Right ventricle myocardium superior (tissue), 1 donor: ENCODE measurements at regions of chr11 and their contacts with region 1.

Region 1: DNA sequence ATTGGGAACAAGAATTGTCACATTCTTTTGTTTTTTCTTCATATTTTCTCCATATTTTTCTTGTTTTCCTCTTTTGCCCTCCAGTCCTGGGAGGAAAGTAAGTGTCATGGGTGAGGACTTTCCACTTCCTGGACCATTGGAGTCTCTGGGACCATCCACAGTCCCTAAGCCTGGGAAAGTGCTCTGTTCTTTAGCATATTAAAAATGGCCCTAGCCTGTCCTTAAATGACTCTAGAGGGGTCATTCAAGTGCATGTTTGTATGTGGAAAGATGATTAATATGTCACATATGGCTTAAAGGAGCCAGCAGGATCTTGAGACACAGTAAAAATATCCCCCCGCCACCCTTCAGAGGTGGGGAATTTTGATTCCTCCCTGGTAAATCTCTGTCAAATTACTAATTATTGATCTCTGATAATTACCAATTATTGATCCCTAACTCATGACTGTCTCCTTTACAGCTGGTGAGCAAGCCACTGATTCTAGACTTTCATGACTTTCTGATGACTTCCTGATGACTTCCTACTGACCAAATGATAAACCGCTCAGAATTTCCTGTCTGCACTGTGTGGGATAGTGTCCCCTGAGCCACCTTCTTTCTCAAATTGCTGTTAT is 20.0 kb upstream of the SCGB1D1 start:
- DNase-seq: no peak
- ATAC-seq: peak; percentile 59

Region 2: DNA sequence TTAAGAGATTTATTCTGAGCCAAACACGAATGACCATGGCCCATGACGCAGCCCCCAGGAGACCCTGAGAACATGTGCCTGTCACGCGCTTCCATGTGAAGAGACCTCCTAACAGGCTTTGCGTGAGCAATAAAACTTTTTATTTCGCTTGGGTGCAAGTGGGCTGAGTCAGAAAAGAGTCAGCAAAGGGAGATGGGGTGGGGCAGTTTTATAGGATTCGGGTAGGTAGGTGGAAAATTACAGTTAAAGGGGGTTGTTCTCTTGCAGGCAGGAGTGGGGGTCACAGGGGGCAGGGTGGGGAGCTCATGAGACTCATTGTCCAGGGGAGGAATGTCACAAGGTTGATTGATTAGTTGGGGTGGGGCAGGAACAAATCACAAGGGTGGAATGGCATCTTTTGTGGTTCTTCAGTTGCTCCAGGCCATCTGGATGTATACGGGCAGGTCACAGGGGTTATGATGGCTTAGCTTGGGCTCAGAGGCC is 125.4 kb before region 1 on chr11:
- intact Hi-C with region 1: no loop called
- DNase-seq: no peak
- ATAC-seq: no peak

Region 3: DNA sequence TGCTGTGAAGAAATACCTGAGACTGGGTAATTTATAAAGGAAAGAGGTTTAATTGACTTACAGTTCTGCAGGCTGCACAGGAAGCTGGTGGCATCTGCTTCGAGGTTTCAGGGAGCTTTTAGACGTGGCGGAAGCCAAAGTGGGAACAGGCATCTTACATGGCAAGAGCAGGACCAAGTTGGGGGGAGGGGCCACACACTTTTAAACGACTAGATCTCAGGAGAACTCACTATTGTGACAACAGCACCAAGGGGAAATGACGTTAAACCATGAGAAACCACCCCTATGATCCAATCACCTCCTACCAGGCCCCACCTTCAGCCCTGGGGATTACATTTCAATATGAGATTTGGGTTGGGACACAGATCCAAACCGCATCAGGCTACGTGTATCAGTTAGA is 139.9 kb after region 1 on chr11:
- intact Hi-C with region 1: loop called (anchors 5 kb)
- DNase-seq: no peak
- ATAC-seq: no peak